Activated T-helper 1 cell treated with anti-CD3 and anti-CD28 coated beads, Interleukin-12 subunit alpha, Interleukin-12 subunit beta, Interleukin-2, Interleukin-4 antibody, amounts not matched to agents 30 ng/mL and 10 ng/mL and 1 ng/mL, durations not matched to agents 14 hours and 24 hours and 36 hours (primary cell): ENCODE measurements at regions of chr17 and their contacts with region 1.

Region 1: GRCh38 chr17:78176548-78177025 is 8.2 kb downstream of the SYNGR2 start:
- DNase-seq: peak; percentile 70
- H3K4me3 Mint-ChIP-seq: no peak overlapping the region
- H3K27ac Mint-ChIP-seq: no peak overlapping the region
- H3K4me1 Mint-ChIP-seq: peaks cover 67% of the 10 kb centered on the region
- H3K27me3 Mint-ChIP-seq: no peaks in the 10 kb centered on the region

Region 2: GRCh38 chr17:78019367-78019975 is 157.1 kb before region 1 on chr17:
- intact Hi-C with region 1: loop called (anchors 1 kb)
- DNase-seq: no peak
- H3K4me3 Mint-ChIP-seq: no peak overlapping the region
- H3K27ac Mint-ChIP-seq: no peak overlapping the region
- H3K4me1 Mint-ChIP-seq: peaks cover 27% of the 10 kb centered on the region
- H3K27me3 Mint-ChIP-seq: no peaks in the 10 kb centered on the region

Region 3: GRCh38 chr17:78082988-78083387 is 93.6 kb before region 1 on chr17:
- intact Hi-C with region 1: loop called (anchors 1 kb)
- DNase-seq: no peak
- H3K4me3 Mint-ChIP-seq: no peak overlapping the region
- H3K27ac Mint-ChIP-seq: no peak overlapping the region
- H3K4me1 Mint-ChIP-seq: peaks cover 5% of the 10 kb centered on the region
- H3K27me3 Mint-ChIP-seq: no peaks in the 10 kb centered on the region

Region 4: DNA sequence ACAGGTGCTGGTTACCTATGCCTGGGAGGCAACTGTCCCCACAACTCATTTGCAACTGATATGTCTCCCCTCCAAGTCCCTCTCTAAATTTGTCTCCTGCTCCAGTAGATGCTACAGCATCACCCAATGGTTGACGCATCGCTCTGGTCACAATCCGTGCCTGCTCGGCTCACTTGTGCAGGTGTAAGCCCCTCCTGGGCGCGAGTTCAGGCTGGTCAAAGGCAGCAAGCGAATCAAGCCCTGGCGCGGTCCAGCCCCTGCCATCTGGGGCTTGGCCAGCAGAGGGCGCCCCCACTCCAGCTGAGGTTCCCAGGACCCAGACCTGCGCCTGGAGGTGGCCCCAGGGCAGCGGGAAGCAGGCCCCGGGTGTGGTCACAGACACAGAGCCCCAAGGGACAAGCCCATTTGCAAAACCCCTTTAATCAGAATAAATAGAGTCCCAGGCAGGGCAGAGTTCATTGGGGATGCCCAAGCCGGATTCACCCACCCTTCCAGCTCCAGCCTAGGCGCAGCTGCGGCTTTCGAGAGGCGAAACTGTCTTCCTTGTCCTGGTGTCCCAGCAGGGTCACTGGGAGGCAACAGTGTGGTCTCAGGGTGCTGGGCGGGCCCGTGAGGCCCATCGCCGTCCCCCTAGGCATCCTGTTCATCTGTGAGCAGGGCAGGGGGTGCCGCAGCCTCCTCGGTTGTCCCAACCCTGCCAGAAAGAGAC is 63.9 kb before region 1 on chr17:
- intact Hi-C with region 1: loop called (anchors 1 kb)
- DNase-seq: peak; percentile 68
- H3K4me3 Mint-ChIP-seq: no peak overlapping the region
- H3K27ac Mint-ChIP-seq: peak overlapping the region; percentile 76
- H3K4me1 Mint-ChIP-seq: peaks cover 30% of the 10 kb centered on the region
- H3K27me3 Mint-ChIP-seq: no peaks in the 10 kb centered on the region

Region 5: GRCh38 chr17:78140169-78140976 is 36.2 kb before region 1 on chr17:
- intact Hi-C with region 1: loop called (anchors 2 kb)
- DNase-seq: peak; percentile 96
- H3K4me3 Mint-ChIP-seq: peak overlapping the region; percentile 28
- H3K27ac Mint-ChIP-seq: peak overlapping the region; percentile 77
- H3K4me1 Mint-ChIP-seq: peaks cover 40% of the 10 kb centered on the region
- H3K27me3 Mint-ChIP-seq: no peaks in the 10 kb centered on the region

Region 6: GRCh38 chr17:78186692-78187595 is 10.4 kb after region 1 on chr17 and contains the starts of genes AFMID and TK1:
- intact Hi-C with region 1: loop called (anchors 1 kb)
- DNase-seq: peak; percentile 87
- H3K4me3 Mint-ChIP-seq: peak within 1 kb of the TSS; percentile 95
- H3K27ac Mint-ChIP-seq: peak within 1 kb of the TSS; percentile 86
- H3K4me1 Mint-ChIP-seq: peaks cover 47% of the 10 kb centered on the region
- H3K27me3 Mint-ChIP-seq: no peaks in the 10 kb centered on the region
- total RNA-seq, gene AFMID: 26.2 and 27.7 TPM in 2 replicates
- total RNA-seq, gene TK1: 65.8 and 66.8 TPM in 2 replicates

Region 7: GRCh38 chr17:78979780-78980623 is 803.4 kb after region 1 on chr17 and contains the start of gene LGALS3BP:
- intact Hi-C with region 1: no loop called
- DNase-seq: peak; percentile 34
- H3K4me3 Mint-ChIP-seq: peak within 1 kb of the TSS; percentile 80
- H3K27ac Mint-ChIP-seq: peak within 1 kb of the TSS; percentile 83
- H3K4me1 Mint-ChIP-seq: peaks cover 10% of the 10 kb centered on the region
- H3K27me3 Mint-ChIP-seq: no peaks in the 10 kb centered on the region
- total RNA-seq, gene LGALS3BP: 75.3 and 78.5 TPM in 2 replicates